ENCODE measurements at regions of chr9 and their contacts with region 1.

Region 1: GRCh38 chr9:71911253-71912074 is at the start of gene C9orf85:
- DNase-seq: peak; percentile 94 to 98 (median 96)
- H3K4me3 ChIP-seq: peak within 1 kb of the TSS; percentile 77 to 83
- H3K4me3 Mint-ChIP-seq: peak within 1 kb of the TSS; percentile 99 to 100 (median 100)
- H3K27ac ChIP-seq: peak within 1 kb of the TSS; percentile 74
- H3K27ac Mint-ChIP-seq: peak within 1 kb of the TSS; percentile 92 to 100 (median 97)
- H3K4me1 ChIP-seq: peaks cover 51% of the 10 kb centered on the region
- H3K4me1 Mint-ChIP-seq: peaks cover 46 to 76% (median 54%) of the 10 kb centered on the region in 4 donors
- H3K27me3 ChIP-seq: no peaks in the 10 kb centered on the region
- H3K27me3 Mint-ChIP-seq: no peaks in the 10 kb centered on the region
- total RNA-seq, gene C9orf85: 8.2 to 10.6 TPM

Region 2: GRCh38 chr9:70258692-70259511 is 1652.6 kb before region 1 on chr9 and contains the start of gene SMC5:
- CTCF ChIA-PET with region 1: no interaction called
- POLR2A ChIA-PET with region 1: no interaction called
- intact Hi-C with region 1: loop called (anchors 2 kb)
- DNase-seq: peak; percentile 85 to 93 (median 92)
- H3K4me3 ChIP-seq: peak within 1 kb of the TSS; percentile 62 to 66
- H3K4me3 Mint-ChIP-seq: peak within 1 kb of the TSS; percentile 89 to 99 (median 96)
- H3K27ac ChIP-seq: peak within 1 kb of the TSS; percentile 95
- H3K27ac Mint-ChIP-seq: peak within 1 kb of the TSS; percentile 91 to 99 (median 97)
- H3K4me1 ChIP-seq: peaks cover 55% of the 10 kb centered on the region
- H3K4me1 Mint-ChIP-seq: peaks cover 44 to 65% (median 51%) of the 10 kb centered on the region in 4 donors
- H3K27me3 ChIP-seq: no peaks in the 10 kb centered on the region
- H3K27me3 Mint-ChIP-seq: no peaks in the 10 kb centered on the region
- total RNA-seq, gene SMC5: 43.7 to 48.3 TPM

Region 3: DNA sequence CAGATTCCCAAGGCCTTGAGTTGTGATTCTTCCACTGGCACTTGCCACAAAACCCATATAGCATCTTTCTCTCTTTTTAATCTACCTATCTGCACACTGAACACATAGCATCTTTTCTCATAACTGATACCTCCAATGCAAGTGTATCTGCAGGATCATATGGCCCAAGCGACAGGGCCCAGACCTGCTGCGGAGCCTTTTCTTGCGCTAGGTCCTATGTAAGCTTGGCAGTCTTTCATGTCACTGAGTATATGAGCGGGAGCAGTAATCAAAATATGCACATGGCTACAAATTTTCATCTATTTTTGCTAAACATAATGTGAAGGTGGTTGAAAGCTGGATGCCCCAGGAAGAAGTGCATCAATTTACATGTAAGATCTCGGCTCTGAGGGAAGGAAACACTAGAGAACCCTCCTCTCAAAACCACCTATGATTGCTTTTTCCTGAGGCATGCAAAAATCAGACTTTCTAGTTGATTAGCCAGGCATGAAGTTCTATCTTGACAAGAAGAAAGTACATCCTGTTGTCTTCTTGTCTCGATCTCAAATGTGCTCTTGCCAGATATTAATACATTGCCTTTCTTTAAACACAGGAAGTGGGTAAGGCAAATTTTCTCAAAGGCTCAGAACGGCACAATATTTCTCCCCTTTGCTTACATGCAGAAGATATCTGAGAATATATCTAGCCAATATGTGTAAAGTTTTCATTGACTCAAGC is 116.2 kb before region 1 on chr9:
- CTCF ChIA-PET with region 1: interaction called, 3 read pairs
- POLR2A ChIA-PET with region 1: interaction called, 3 read pairs
- intact Hi-C with region 1: loop called (anchors 5 kb)
- DNase-seq: peak; percentile 47 to 81 (median 74)
- H3K4me3 ChIP-seq: peak overlapping the region; percentile 10 to 14
- H3K4me3 Mint-ChIP-seq: peak overlapping the region; percentile 61 to 79 (median 70)
- H3K27ac ChIP-seq: peak overlapping the region; percentile 49
- H3K27ac Mint-ChIP-seq: peak overlapping the region; percentile 85 to 97 (median 92)
- H3K4me1 ChIP-seq: peaks cover 74% of the 10 kb centered on the region
- H3K4me1 Mint-ChIP-seq: peaks cover 39 to 68% (median 57%) of the 10 kb centered on the region in 4 donors
- H3K27me3 ChIP-seq: no peaks in the 10 kb centered on the region
- H3K27me3 Mint-ChIP-seq: no peaks in the 10 kb centered on the region

Region 4: GRCh38 chr9:71806901-71807307 is 104.6 kb before region 1 on chr9:
- CTCF ChIA-PET with region 1: interaction called, 11 read pairs
- POLR2A ChIA-PET with region 1: interaction called, 4 read pairs
- intact Hi-C with region 1: no loop called
- DNase-seq: peak; percentile 60 to 64 (median 63)
- H3K4me3 ChIP-seq: no peak overlapping the region
- H3K4me3 Mint-ChIP-seq: peak overlapping the region in 2 of 8 donors; percentile 18 to 32
- H3K27ac ChIP-seq: no peak overlapping the region
- H3K27ac Mint-ChIP-seq: peak overlapping the region in 6 of 7 donors; percentile 2 to 93 (median 54)
- H3K4me1 ChIP-seq: peaks cover 7% of the 10 kb centered on the region
- H3K4me1 Mint-ChIP-seq: peaks cover 5 to 7% (median 6%) of the 10 kb centered on the region in 4 donors
- H3K27me3 ChIP-seq: no peaks in the 10 kb centered on the region
- H3K27me3 Mint-ChIP-seq: no peaks in the 10 kb centered on the region

Region 5: GRCh38 chr9:71897577-71897976 is 13.9 kb before region 1 on chr9:
- CTCF ChIA-PET with region 1: interaction called, 10 read pairs
- POLR2A ChIA-PET with region 1: interaction called, 9 read pairs
- intact Hi-C with region 1: loop called (anchors 2 kb)
- DNase-seq: peak in 4 of 5 donors; percentile 17 to 41 (median 37)
- H3K4me3 ChIP-seq: no peak overlapping the region
- H3K4me3 Mint-ChIP-seq: peak overlapping the region in 6 of 8 donors; percentile 35 to 64 (median 46)
- H3K27ac ChIP-seq: no peak overlapping the region
- H3K27ac Mint-ChIP-seq: peak overlapping the region in 6 of 7 donors; percentile 17 to 79 (median 36)
- H3K4me1 ChIP-seq: peaks cover 74% of the 10 kb centered on the region
- H3K4me1 Mint-ChIP-seq: peaks cover 45 to 76% (median 60%) of the 10 kb centered on the region in 4 donors
- H3K27me3 ChIP-seq: no peaks in the 10 kb centered on the region
- H3K27me3 Mint-ChIP-seq: no peaks in the 10 kb centered on the region

Measured in CD4-positive, alpha-beta memory T cell (primary cell).